SK-N-SH (cell line): ENCODE measurements at regions of chr22 and their contacts with region 1.

Region 1: DNA sequence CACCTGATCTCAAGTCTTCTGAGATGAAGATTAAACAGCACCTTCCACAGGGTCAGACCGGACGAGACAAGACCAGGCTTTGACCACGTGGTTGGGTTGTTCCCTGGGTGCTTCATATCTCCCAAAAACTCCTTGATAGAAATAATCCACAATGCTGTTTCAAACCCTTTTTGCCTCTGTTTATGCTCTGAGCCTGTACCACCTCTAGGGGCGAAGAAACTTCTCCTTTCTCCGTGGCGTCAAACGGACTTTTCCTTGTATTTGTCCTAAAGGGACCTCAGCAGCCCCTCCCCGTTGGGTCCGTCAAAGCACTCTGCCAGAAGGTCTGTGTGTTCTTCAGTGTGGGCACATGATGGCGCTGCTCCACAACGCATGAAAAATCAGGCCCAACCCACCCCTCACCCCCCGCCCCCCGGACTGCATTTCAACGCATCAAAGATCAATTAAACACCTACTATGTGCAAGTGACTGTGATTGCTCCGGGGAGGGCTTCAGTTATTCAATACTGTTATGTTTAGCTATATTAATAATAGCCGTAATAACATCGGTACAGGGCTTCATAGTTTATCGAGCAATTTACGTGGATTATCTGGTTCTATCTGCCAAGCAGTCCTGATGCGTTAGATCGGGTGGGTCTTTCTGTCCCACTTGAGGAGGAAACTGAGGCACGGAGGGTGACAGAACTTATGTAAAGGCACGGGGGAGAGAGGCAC is 17.3 kb upstream of the EIF3D start:
- DNase-seq: peak; percentile 86
- H3K4me3 ChIP-seq: no peak overlapping the region
- H3K27ac ChIP-seq: no peak overlapping the region
- H3K4me1 ChIP-seq: peaks cover 2% of the 10 kb centered on the region in 2 experiments; a peak in 1 of 4 replicates
- H3K27me3 ChIP-seq: peaks cover 9% of the 10 kb centered on the region
- CTCF ChIP-seq: peak; percentile 65
- EP300 ChIP-seq: no peak
- RAD21 ChIP-seq: peak; percentile 84

Region 2: DNA sequence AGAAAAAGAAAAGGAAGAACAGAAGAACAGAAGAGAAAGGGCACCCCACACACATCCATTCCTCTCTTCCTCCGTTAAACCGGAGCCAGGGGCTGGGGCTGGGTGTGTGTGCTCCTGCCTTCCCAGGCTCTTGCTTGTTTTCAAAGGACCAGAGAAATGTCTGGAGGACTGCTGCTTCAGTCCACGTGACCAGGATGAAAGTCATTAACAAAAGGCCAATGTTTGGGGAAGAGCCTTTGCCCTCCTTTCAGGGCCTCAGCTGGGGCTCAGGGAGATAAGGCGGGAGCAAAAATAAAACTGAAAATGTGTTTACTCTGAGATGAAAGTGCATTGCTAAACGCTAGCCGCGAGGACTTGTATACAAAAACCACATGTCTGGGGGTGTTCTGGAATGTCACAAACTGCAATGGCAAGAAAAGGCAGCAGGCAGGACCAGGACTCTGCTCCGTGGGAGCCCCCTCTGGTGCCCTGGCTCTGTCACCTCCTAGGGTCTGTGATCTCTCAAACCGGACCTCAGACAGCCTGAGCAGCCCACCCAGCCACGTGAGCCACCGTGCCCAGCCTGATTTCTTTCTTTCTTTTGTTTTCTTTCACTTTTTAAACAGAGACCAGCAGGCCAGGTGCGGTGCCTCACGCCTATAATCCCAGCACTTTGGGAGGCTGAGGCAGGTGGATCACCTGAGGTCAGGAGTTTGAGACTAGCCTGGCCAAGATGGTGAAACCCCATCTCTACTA is 126.9 kb before region 1 on chr22:
- CTCF ChIA-PET with region 1: no interaction called
- POLR2A ChIA-PET with region 1: no interaction called
- DNase-seq: no peak
- H3K4me3 ChIP-seq: no peak overlapping the region
- H3K27ac ChIP-seq: no peak overlapping the region
- H3K4me1 ChIP-seq: no peaks in the 10 kb centered on the region
- H3K27me3 ChIP-seq: no peaks in the 10 kb centered on the region
- CTCF ChIP-seq: no peak
- EP300 ChIP-seq: no peak
- RAD21 ChIP-seq: no peak

Region 3: DNA sequence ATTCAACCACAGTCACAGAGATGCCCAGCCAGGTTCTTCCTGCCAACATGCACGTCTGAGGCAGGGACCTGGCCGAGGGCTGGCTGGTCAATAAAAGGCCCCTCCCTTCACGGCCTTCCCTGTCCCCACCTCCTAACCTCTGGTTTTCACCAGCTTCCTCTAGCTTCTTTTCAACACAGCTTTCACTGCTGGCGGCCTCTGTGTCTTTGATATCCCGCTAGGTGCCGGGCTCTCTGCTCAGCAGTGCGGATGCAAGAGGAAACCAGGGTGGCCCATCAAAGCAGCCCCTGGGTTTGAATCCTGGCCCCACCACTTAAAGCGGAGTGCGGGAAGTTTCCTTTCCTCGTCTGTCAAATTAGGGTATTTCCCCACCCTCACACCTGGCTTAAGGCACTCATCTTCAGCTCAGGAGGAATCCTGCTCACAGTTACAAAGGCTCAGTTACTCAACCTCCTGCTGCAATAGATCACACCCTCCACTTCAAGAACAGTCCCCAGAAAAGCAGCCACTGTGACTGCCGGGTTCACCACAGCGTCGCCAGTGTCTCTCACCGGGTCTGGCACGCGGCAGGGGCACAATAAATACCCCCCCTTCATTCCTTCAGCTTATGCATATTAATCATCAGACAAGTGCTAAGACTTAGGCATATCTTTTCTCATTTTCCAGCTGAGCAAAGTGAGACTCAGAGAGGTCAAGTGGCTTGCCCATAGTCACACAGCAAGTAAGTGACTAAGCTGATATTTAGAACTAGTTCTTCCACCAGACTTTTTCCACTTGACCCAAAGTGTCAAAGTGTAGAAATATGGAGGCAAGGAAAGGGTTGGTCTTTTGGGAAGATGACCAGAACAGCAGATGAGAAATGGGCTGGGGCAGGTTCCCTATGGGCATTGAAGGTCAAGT is 110.5 kb before region 1 on chr22:
- CTCF ChIA-PET with region 1: no interaction called
- POLR2A ChIA-PET with region 1: no interaction called
- DNase-seq: no peak
- H3K4me3 ChIP-seq: no peak overlapping the region
- H3K27ac ChIP-seq: no peak overlapping the region
- H3K4me1 ChIP-seq: peaks cover 12 to 31% of the 10 kb centered on the region in 2 experiments; a peak in 3 of 4 replicates
- H3K27me3 ChIP-seq: no peaks in the 10 kb centered on the region
- CTCF ChIP-seq: no peak
- EP300 ChIP-seq: no peak
- RAD21 ChIP-seq: no peak

Region 4: DNA sequence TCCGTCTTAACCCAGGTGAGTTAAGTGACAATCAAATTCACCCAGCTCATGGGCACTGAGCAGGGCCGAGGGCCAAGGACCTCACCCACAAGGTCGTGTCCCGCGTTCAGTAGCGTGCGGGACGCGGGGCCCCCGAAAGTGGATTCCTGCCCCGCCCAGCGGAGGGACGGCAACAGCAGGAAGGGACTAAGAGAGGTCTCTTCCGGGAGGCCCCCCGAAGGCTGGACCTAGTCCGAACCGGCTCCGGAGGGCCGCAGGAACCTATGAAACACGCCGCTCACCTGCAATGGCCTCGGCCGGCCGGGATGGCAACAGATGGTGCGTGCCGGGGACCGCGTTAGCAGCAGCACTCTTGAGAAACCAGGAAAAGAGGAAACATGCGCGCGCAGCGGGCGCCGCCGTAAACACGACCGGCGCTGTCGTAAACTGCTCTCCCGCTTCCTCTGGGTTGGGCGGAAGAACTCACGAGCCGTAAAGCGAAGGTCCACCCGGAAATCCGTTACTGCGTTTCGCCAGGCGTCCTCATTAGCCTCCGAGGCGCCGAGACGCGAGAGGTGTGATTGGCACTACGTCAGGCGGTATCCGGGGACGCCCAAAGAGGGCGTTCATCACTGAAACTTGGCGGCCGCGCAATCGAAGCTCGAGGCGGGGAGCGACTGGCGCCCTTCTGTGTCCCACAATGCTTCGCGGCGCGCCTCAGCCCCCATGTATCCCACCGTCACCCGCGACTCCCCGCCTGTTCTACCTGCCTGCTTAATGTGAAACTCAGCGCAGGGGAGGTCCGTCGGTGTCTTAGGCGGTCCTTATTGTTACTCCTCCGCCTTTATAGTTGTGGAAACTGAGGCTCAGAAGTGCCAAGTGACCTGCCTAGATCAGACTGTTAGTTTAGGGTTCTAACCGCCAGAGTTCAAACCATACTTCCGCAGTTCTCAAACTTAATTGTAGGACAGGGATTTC is 17.2 kb before region 1 on chr22 and contains the start of gene EIF3D:
- CTCF ChIA-PET with region 1: interaction called, 11 read pairs
- POLR2A ChIA-PET with region 1: no interaction called
- DNase-seq: peak; percentile 91
- H3K4me3 ChIP-seq: peak within 1 kb of the TSS; percentile 76 to 82
- H3K27ac ChIP-seq: peak within 1 kb of the TSS; percentile 83 to 90
- H3K4me1 ChIP-seq: peaks cover 3 to 6% of the 10 kb centered on the region in 2 experiments; a peak in 1 of 4 replicates
- H3K27me3 ChIP-seq: no peaks in the 10 kb centered on the region
- CTCF ChIP-seq: no peak
- EP300 ChIP-seq: no peak
- RAD21 ChIP-seq: no peak
- polyA plus RNA-seq, gene EIF3D: 423 and 498 TPM in 2 replicates

Region 5: GRCh38 chr22:36562261-36562835 is 16.1 kb after region 1 on chr22:
- CTCF ChIA-PET with region 1: interaction called, 14 read pairs
- POLR2A ChIA-PET with region 1: no interaction called
- DNase-seq: no peak
- H3K4me3 ChIP-seq: no peak overlapping the region
- H3K27ac ChIP-seq: no peak overlapping the region
- H3K4me1 ChIP-seq: peaks cover 0 to 5% of the 10 kb centered on the region in 2 experiments; a peak in 1 of 4 replicates
- H3K27me3 ChIP-seq: no peaks in the 10 kb centered on the region; the same call in 1 of the 2 replicates
- CTCF ChIP-seq: no peak
- EP300 ChIP-seq: no peak
- RAD21 ChIP-seq: no peak

Region 6: DNA sequence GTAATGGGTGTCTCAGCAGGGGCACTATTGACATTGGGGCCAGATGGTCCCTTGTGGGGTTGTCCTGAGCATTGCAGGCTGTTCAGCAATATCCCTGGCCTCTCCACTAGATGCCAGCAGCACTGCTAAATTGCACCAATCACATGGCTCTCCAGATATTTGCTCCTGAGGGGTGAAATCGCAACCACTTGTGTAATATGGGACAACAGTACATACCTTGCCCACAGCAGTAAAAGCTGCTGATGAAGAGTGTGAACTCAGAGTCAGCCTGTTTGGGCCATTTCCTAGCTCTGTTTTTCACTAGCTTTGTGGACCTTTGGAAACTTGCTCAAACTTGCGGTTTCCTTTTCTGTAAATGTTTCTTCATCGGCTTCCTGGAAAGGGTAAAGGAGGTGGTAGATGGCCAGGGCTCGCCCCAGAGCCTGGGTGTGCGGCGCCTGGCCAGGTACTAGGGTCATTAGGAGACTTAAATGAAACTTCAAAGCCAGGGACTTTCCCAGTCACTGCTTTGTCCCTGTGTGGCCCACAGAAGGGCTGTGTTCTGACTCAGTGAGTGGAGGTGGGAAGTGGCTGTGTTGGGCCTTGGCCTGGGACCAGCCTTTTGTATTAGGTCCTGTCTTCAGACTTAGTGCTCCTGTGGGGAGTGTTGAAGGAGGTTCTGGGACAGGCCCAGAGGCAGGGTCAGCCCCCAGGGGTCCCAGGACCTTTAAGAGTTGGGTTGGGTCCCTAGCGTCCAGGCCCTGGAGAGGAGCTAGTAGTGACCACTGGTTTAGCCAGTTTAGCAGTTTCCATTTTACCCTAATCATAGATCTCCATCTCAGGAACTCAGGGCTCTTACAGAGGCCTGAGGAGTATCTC is 327.7 kb after region 1 on chr22:
- CTCF ChIA-PET with region 1: no interaction called
- POLR2A ChIA-PET with region 1: no interaction called
- DNase-seq: peak; percentile 62
- H3K4me3 ChIP-seq: no peak overlapping the region
- H3K27ac ChIP-seq: no peak overlapping the region
- H3K4me1 ChIP-seq: peaks cover 0 to 13% of the 10 kb centered on the region in 2 experiments; a peak in 1 of 4 replicates
- H3K27me3 ChIP-seq: no peaks in the 10 kb centered on the region; the same call in none of the 2 replicates
- CTCF ChIP-seq: peak; percentile 45
- EP300 ChIP-seq: no peak
- RAD21 ChIP-seq: peak; percentile 51